Heart right ventricle (tissue), 16 donors: ENCODE measurements at regions of chr7 and their contacts with region 1.

Region 1: GRCh38 chr7:74173866-74174605 is at the start of gene EIF4H:
- DNase-seq: peak; percentile 96 to 98
- ATAC-seq: peak; percentile 97 to 99 (median 98)
- H3K4me3 ChIP-seq: peak within 1 kb of the TSS; percentile 80 to 99 (median 95)
- H3K27ac ChIP-seq: peak within 1 kb of the TSS; percentile 64 to 96 (median 95)
- H3K4me1 ChIP-seq: peaks cover 16 to 50% (median 47%) of the 10 kb centered on the region in 9 donors
- H3K27me3 ChIP-seq: no peaks in the 10 kb centered on the region
- CTCF ChIP-seq: peak in 1 of 9 donors; percentile 7
- total RNA-seq, gene EIF4H: 182 to 239 (median 193) TPM

Region 2: DNA sequence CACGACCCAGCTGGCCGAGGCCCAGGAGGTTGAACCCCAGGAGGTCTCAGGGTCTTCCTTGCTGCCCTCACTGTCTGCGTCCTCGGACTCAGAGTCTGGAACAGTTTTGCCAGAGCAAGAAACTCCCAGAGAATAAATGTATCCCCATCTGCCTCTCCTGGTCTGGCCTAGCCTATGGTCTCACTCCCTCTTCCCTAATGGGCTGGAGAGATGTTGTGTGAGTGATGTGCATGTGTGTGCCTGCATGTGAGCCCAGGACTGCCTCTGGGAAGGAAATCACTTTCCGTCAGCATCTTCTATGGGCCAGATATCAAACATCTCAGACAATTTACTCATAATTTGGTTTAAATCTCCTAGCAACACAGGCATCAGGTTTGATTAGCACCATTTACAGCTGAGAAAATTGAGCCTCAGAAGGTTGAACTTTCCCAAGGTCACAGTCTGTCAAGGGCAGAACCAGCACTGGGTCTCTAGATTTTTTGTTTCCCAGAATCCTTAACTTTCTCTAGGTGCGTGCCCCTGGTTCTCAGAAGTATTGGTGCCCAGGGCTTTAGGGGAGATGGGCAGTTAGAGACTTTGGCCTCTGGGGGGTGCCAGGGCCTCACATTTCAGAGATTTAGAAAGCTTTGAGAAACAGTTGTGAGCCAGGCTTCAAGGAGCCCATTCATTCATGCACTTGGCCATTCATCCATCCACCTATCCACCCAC is 308.1 kb before region 1 on chr7:
- intact Hi-C with region 1: loop called in 1 of 10 experiments (anchors 10 kb)
- DNase-seq: no peak
- ATAC-seq: peak in 7 of 8 donors; percentile 47 to 84 (median 62)
- H3K4me3 ChIP-seq: no peak overlapping the region
- H3K27ac ChIP-seq: no peak overlapping the region
- H3K4me1 ChIP-seq: peaks cover 0 to 23% (median 9%) of the 10 kb centered on the region in 9 donors
- H3K27me3 ChIP-seq: peaks cover 0 to 4% (median 0%) of the 10 kb centered on the region in 7 donors
- CTCF ChIP-seq: peak; percentile 55 to 79 (median 71)

Region 3: DNA sequence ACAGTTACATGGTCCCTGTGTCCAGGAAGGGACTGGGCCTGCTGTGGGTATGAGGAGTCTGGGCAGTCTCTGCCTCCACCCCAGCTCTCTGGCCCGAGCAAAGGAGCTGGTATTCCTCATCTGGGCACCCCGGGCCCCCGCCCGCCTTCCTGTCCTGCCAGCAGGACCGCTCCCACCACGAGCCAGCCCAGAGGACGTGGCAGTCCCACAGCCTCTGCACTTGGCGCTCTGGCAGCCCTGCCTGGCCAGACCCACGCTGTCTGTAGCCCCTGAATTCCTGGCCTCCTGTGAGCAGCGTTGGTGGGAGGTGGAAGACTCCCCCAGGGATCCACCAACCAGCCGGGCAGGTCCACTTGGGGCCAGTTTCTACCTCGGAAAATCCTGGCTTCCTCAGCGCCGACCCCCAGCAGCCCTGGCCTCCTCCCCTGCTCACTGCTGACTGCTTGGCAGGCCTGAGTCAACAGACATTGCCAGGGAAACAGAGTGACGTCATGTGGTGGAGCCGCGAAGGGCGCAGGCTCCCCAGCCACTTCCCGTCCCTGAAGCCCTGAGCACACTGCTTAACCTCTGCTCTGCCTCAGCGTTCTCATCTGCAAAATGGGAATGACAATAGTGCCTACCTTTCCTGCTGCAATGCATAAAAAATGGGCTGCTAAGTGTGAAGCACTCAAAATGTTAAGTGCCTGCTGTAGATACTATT is 112.0 kb before region 1 on chr7:
- intact Hi-C with region 1: loop called in 1 of 10 experiments (anchors 10 kb)
- DNase-seq: peak; percentile 78 to 88
- ATAC-seq: peak; percentile 90 to 96 (median 93)
- H3K4me3 ChIP-seq: peak overlapping the region in 7 of 10 donors; percentile 3 to 31 (median 20)
- H3K27ac ChIP-seq: peak overlapping the region in 9 of 10 donors; percentile 33 to 89 (median 80)
- H3K4me1 ChIP-seq: peaks cover 0 to 14% (median 8%) of the 10 kb centered on the region in 9 donors
- H3K27me3 ChIP-seq: no peaks in the 10 kb centered on the region
- CTCF ChIP-seq: no peak

Region 4: GRCh38 chr7:74083117-74083876 is 90.7 kb before region 1 on chr7 and contains the start of gene LIMK1:
- intact Hi-C with region 1: loop called in 1 of 10 experiments (anchors 5 kb)
- DNase-seq: peak; percentile 74 to 87
- ATAC-seq: peak; percentile 84 to 97 (median 92)
- H3K4me3 ChIP-seq: peak within 1 kb of the TSS; percentile 50 to 95 (median 76)
- H3K27ac ChIP-seq: peak within 1 kb of the TSS in 7 of 10 donors; percentile 23 to 85 (median 56)
- H3K4me1 ChIP-seq: peaks cover 6 to 23% (median 20%) of the 10 kb centered on the region in 9 donors
- H3K27me3 ChIP-seq: no peaks in the 10 kb centered on the region
- CTCF ChIP-seq: no peak
- total RNA-seq, gene LIMK1: 6.1 to 17.3 (median 9.9) TPM

Region 5: GRCh38 chr7:74094224-74095101 is 79.6 kb before region 1 on chr7:
- intact Hi-C with region 1: loop called in 3 of 10 experiments (anchors 5 kb)
- DNase-seq: peak; percentile 44 to 66
- ATAC-seq: peak; percentile 50 to 81 (median 70)
- H3K4me3 ChIP-seq: peak overlapping the region in 9 of 10 donors; percentile 31 to 63 (median 54)
- H3K27ac ChIP-seq: peak overlapping the region in 9 of 10 donors; percentile 17 to 92 (median 74)
- H3K4me1 ChIP-seq: peaks cover 10 to 38% (median 30%) of the 10 kb centered on the region in 9 donors
- H3K27me3 ChIP-seq: no peaks in the 10 kb centered on the region
- CTCF ChIP-seq: no peak

Region 6: DNA sequence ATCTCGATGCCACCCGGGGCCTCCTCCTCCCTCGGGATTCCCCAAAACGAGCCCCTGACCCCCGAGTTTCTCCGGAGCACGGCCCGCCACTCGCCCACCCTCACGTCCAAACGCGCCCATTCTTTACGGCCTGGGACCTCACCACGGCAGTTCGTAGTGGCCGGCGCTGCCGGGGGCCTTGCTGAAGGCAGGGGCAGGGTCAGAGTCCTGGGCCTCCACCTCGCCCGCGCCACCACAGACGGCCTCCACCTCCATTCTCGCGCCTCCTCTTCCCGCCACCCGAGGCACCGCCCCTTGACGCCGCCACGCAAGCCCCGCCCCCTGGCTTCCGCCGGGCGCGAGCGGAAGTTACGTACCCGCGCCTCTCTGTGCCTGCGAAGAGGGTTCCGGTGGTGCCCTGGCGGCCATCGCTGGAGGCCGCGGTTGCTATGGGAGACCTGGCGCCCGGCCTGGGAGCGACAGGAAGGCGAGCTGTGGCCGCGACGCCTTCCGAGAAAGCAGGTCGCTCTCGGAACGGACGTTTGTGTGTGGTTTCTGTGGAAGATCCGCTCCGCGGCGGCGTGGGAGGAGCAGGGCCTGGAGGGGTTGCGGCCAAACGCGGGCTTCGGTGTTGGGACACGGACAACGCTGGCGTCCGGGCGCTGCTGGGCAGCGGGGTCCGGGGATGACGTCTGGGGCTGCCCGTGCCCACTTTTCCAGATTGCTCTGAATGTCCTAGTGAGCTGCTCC is 80.3 kb after region 1 on chr7 and contains the start of gene RFC2:
- intact Hi-C with region 1: loop called in 1 of 10 experiments (anchors 5 kb)
- DNase-seq: peak; percentile 97 to 98
- ATAC-seq: peak; percentile 99 to 100 (median 100)
- H3K4me3 ChIP-seq: peak within 1 kb of the TSS; percentile 47 to 95 (median 78)
- H3K27ac ChIP-seq: peak within 1 kb of the TSS; percentile 89 to 98 (median 93)
- H3K4me1 ChIP-seq: peaks cover 3 to 38% (median 28%) of the 10 kb centered on the region in 9 donors
- H3K27me3 ChIP-seq: no peaks in the 10 kb centered on the region
- CTCF ChIP-seq: peak in 8 of 9 donors; percentile 16 to 54 (median 43)
- total RNA-seq, gene RFC2: 7.0 to 13.1 (median 10.7) TPM